ENCODE measurements at regions of chr3 and their contacts with region 1.

Region 1: GRCh38 chr3:46897829-46898320 is 20.4 kb downstream of the PTH1R start:
- DNase-seq: no peak
- ATAC-seq: no peak
- H3K4me3 ChIP-seq: no peak overlapping the region
- H3K27ac ChIP-seq: no peak overlapping the region
- H3K4me1 ChIP-seq: peaks cover under 1% of the 10 kb centered on the region; the same call in 1 of the 2 replicates
- H3K27me3 ChIP-seq: no peaks in the 10 kb centered on the region
- CTCF ChIP-seq: no peak

Region 2: DNA sequence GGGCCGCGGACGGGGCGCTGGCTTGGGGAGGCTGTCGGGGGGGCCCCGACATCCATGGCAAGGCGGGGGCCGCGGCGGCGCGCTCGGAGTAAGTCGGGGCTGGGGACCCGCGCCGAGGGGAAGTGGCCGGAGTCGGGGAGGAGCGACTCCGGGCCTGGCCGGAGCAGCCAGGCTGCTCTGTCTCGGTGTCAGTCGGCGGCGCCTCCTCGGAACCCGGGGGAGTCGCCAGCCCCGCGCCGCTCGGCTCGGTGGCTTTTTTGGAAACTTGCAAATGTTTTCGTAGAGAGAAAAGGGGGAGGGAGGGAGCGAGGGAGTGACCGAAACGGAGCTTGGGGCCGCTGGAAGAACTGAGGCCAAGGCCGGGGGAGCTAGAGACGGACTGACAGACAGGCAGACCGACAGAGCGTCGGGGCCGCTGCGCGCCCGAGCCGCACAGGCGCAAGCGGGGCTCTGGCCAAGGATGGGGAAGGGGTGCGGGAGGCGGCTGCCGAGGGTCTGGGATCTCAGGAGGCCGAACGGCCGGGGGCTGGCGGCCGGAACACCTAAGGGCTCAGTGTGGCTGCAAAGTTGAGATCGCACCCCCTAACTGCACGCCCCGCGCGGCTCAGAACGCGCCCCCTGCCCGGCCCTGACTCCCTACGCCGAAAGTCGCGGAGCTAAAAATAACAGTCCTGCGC is 15.4 kb before region 1 on chr3:
- CTCF ChIA-PET with region 1: interaction called, 11 read pairs
- POLR2A ChIA-PET with region 1: no interaction called
- in situ Hi-C with region 1: no loop called
- intact Hi-C with region 1: no loop called
- DNase-seq: no peak
- ATAC-seq: peak; percentile 66
- H3K4me3 ChIP-seq: peak overlapping the region; percentile 33 to 47
- H3K27ac ChIP-seq: no peak overlapping the region
- H3K4me1 ChIP-seq: no peaks in the 10 kb centered on the region
- H3K27me3 ChIP-seq: no peaks in the 10 kb centered on the region
- CTCF ChIP-seq: no peak